Vagina (tissue), 2 donors: ENCODE measurements at regions of chr9 and their contacts with region 1.

Region 1: GRCh38 chr9:26955921-26956859 is at the start of gene IFT74:
- DNase-seq: peak in 1 of 2 donors; percentile 98
- H3K4me3 ChIP-seq: peak within 1 kb of the TSS; percentile 58 to 78
- H3K27ac ChIP-seq: peak within 1 kb of the TSS; percentile 78
- H3K4me1 ChIP-seq: peaks cover 9% of the 10 kb centered on the region
- H3K27me3 ChIP-seq: no peaks in the 10 kb centered on the region
- CTCF ChIP-seq: no peak
- POLR2A ChIP-seq: no peak
- total RNA-seq, gene IFT74: 16.0 TPM

Region 2: DNA sequence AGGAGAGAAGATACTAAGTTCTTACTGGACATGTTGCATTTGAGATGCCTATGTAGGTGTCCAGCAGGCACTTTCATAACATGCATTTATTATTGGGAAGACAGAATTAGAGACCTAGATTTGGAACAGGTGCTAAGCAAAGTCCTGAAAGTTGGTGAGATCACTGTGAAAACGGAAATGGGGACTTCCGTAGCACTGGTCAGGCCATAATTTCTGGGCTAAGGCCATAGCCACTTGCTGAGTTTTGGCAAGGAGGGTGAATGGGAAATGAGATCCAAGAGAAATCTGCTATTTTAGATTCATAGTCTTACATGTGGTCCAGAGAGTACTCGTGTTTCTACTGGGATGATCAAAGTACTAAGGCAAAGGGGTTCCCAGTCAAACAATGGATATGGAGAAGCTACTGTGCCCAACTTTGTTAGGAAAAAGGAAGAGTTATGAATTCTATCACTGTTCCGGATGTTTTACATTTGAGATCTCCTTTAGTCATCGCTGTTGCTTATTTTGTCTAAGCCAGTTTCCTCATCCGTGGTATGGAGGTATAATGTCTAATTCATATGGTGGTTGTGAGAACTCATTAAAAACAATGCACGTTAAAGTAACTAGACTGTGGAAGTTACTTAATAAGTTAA is 186.2 kb after region 1 on chr9:
- intact Hi-C with region 1: no loop called
- DNase-seq: no peak
- H3K4me3 ChIP-seq: no peak overlapping the region
- H3K27ac ChIP-seq: no peak overlapping the region
- H3K4me1 ChIP-seq: no peaks in the 10 kb centered on the region
- H3K27me3 ChIP-seq: no peaks in the 10 kb centered on the region
- CTCF ChIP-seq: no peak
- POLR2A ChIP-seq: no peak

Region 3: GRCh38 chr9:27573634-27574590 is 617.7 kb after region 1 on chr9:
- intact Hi-C with region 1: loop called (anchors 10 kb)
- DNase-seq: peak; percentile 100
- H3K4me3 ChIP-seq: peak overlapping the region; percentile 65 to 66
- H3K27ac ChIP-seq: peak overlapping the region; percentile 98
- H3K4me1 ChIP-seq: peaks cover 10% of the 10 kb centered on the region
- H3K27me3 ChIP-seq: no peaks in the 10 kb centered on the region
- CTCF ChIP-seq: peak in 1 of 3 experiments; percentile 15
- POLR2A ChIP-seq: peak in 1 of 2 donors; percentile 77